Activated naive CD4-positive, alpha-beta T cell treated with anti-CD3 and anti-CD28 coated beads for 36 hours (primary cell): ENCODE measurements at regions of chr1 and their contacts with region 1.

Region 1: GRCh38 chr1:55140546-55140983 is 74.6 kb downstream of the USP24 start:
- DNase-seq: peak; percentile 89
- H3K4me3 Mint-ChIP-seq: no peak overlapping the region
- H3K27ac Mint-ChIP-seq: peak overlapping the region; percentile 81
- H3K4me1 Mint-ChIP-seq: peaks cover 15% of the 10 kb centered on the region
- H3K27me3 Mint-ChIP-seq: no peaks in the 10 kb centered on the region

Region 2: GRCh38 chr1:55021965-55022546 is 118.5 kb before region 1 on chr1:
- CTCF ChIA-PET with region 1: no interaction called
- intact Hi-C with region 1: no loop called
- DNase-seq: peak; percentile 82
- H3K4me3 Mint-ChIP-seq: no peak overlapping the region
- H3K27ac Mint-ChIP-seq: no peak overlapping the region
- H3K4me1 Mint-ChIP-seq: no peaks in the 10 kb centered on the region
- H3K27me3 Mint-ChIP-seq: no peaks in the 10 kb centered on the region

Region 3: DNA sequence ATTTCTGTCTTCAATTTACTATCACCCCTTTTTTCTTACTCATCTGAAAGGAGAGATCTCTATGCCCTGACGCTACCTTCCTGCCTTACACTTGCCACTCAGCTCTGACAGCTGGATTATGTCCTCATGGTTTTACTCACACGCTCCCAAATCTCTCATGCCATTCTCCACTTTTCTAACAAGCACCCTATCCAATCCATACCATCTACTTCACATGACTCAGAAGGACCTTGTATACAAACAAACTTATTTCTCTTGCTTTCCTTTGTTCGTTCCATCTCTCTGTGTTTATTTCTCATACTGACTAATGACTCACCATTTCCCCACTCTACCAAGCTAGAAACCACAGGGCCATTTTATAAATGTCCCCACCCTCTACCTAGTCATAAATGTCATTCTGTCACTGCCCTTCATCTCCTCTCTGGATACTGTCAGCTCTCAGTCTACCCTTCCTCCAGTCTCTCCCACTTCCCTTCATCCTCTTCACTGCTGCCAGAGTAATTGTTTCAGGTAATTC is 12.7 kb before region 1 on chr1:
- CTCF ChIA-PET with region 1: interaction called, 6 read pairs
- intact Hi-C with region 1: loop called (anchors 1 kb)
- DNase-seq: peak; percentile 27
- H3K4me3 Mint-ChIP-seq: no peak overlapping the region
- H3K27ac Mint-ChIP-seq: peak overlapping the region; percentile 80
- H3K4me1 Mint-ChIP-seq: peaks cover 35% of the 10 kb centered on the region
- H3K27me3 Mint-ChIP-seq: no peaks in the 10 kb centered on the region

Region 4: GRCh38 chr1:55230659-55231058 is 90.1 kb after region 1 on chr1:
- CTCF ChIA-PET with region 1: interaction called, 10 read pairs
- intact Hi-C with region 1: no loop called
- DNase-seq: no peak
- H3K4me3 Mint-ChIP-seq: no peak overlapping the region
- H3K27ac Mint-ChIP-seq: no peak overlapping the region
- H3K4me1 Mint-ChIP-seq: peaks cover 11% of the 10 kb centered on the region
- H3K27me3 Mint-ChIP-seq: peaks cover 9% of the 10 kb centered on the region